ENCODE measurements at regions of chr12 and their contacts with region 1.

Region 1: GRCh38 chr12:120725659-120726509 is at the start of gene ACADS:
- DNase-seq: peak; percentile 94 to 97
- ATAC-seq: peak; percentile 100
- H3K4me3 ChIP-seq: peak within 1 kb of the TSS; percentile 27 to 40
- H3K27ac ChIP-seq: peak within 1 kb of the TSS in 1 of 2 donors; percentile 28
- H3K4me1 ChIP-seq: no peaks in the 10 kb centered on the region
- H3K27me3 ChIP-seq: no peaks in the 10 kb centered on the region
- total RNA-seq, gene ACADS: 11.3 to 15.6 TPM

Region 2: GRCh38 chr12:120625557-120626419 is 100.1 kb before region 1 on chr12:
- intact Hi-C with region 1: no loop called
- DNase-seq: peak in 1 of 2 donors; percentile 78
- ATAC-seq: no peak
- H3K4me3 ChIP-seq: no peak overlapping the region
- H3K27ac ChIP-seq: no peak overlapping the region
- H3K4me1 ChIP-seq: no peaks in the 10 kb centered on the region
- H3K27me3 ChIP-seq: no peaks in the 10 kb centered on the region

Region 3: GRCh38 chr12:120771097-120771496 is 45.2 kb after region 1 on chr12:
- intact Hi-C with region 1: no loop called
- DNase-seq: no peak
- ATAC-seq: no peak
- H3K4me3 ChIP-seq: no peak overlapping the region
- H3K27ac ChIP-seq: no peak overlapping the region
- H3K4me1 ChIP-seq: no peaks in the 10 kb centered on the region
- H3K27me3 ChIP-seq: no peaks in the 10 kb centered on the region

Region 4: DNA sequence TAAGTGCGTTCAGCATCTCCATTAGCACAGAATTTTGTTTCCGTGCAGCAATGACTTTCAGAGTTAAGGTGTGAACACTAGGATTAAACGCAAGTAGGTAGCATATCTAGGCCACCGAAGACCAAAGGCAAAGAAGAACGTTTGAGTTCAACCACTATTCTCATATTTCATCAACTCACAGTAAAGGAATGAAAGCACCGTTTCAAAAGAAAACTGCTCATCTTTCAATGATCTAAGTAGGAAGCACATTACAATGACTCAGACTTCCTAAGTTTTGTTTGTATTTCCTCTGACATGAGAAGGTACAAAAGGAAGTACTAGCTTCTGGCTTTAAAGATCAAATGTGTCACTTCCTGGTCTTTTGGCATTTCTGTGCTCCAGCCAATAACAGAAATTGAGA is 57.3 kb after region 1 on chr12:
- intact Hi-C with region 1: no loop called
- DNase-seq: no peak
- ATAC-seq: no peak
- H3K4me3 ChIP-seq: no peak overlapping the region
- H3K27ac ChIP-seq: no peak overlapping the region
- H3K4me1 ChIP-seq: no peaks in the 10 kb centered on the region
- H3K27me3 ChIP-seq: no peaks in the 10 kb centered on the region

Region 5: GRCh38 chr12:120961604-120962531 is 236.0 kb after region 1 on chr12:
- intact Hi-C with region 1: loop called in 1 of 2 experiments (anchors 10 kb)
- DNase-seq: peak in 1 of 2 donors; percentile 83
- ATAC-seq: no peak
- H3K4me3 ChIP-seq: no peak overlapping the region
- H3K27ac ChIP-seq: no peak overlapping the region
- H3K4me1 ChIP-seq: no peaks in the 10 kb centered on the region
- H3K27me3 ChIP-seq: no peaks in the 10 kb centered on the region

Region 6: DNA sequence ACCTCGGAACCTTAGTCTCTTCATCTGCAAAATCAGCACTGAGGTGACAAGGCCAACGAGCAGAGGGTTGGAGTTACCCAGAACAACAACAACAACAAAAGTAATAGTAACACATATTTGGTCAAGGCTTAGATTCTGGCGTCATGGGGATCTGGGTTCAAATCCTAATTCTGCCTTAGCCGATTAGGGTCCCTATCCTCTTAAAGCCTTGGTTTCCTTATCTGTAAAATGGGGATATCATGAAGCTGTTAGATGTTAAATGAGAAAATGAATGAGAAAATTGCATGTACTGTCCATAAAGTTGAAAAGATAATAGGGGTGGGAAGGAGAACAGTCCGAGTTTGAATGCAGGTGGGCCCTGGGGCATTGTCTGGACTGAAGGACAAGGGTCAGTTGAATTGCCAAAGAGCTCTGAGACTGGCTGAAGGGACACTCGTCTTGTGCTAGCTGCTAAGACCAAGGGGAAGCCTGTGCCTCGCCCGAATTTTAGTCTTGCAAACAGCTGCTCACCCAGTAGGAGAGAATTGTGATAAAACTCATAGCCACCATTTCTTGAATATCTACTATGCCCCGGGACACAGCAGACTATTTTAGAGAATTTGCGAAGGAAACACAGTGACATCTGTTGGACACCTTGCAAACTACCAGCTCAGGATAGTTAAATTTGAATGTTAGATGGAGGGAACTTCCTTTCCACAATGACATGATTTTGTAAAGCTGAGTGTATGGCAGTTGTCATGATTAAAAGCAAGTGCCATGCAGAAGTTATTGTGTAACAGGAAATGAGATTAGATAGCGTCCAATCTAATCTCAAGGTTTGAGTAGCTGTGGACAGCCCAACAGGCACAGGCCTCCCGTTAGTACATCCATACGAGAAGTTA is 245.7 kb after region 1 on chr12:
- intact Hi-C with region 1: loop called (anchors 10 kb)
- DNase-seq: no peak
- ATAC-seq: peak; percentile 74
- H3K4me3 ChIP-seq: no peak overlapping the region
- H3K27ac ChIP-seq: no peak overlapping the region
- H3K4me1 ChIP-seq: no peaks in the 10 kb centered on the region
- H3K27me3 ChIP-seq: no peaks in the 10 kb centered on the region